Mammary epithelial cell (primary cell): ENCODE measurements at regions of chr3 and their contacts with region 1.

Region 1: GRCh38 chr3:194315088-194315964 is 35.8 kb downstream of the CPN2 start:
- DNase-seq: peak; percentile 89
- H3K4me3 ChIP-seq: peak overlapping the region; percentile 26 to 51 (median 30)
- H3K27ac ChIP-seq: peak overlapping the region; percentile 63
- H3K4me1 ChIP-seq: peaks cover 16% of the 10 kb centered on the region
- H3K27me3 ChIP-seq: no peaks in the 10 kb centered on the region
- CTCF ChIP-seq: peak; percentile 73 to 92

Region 2: DNA sequence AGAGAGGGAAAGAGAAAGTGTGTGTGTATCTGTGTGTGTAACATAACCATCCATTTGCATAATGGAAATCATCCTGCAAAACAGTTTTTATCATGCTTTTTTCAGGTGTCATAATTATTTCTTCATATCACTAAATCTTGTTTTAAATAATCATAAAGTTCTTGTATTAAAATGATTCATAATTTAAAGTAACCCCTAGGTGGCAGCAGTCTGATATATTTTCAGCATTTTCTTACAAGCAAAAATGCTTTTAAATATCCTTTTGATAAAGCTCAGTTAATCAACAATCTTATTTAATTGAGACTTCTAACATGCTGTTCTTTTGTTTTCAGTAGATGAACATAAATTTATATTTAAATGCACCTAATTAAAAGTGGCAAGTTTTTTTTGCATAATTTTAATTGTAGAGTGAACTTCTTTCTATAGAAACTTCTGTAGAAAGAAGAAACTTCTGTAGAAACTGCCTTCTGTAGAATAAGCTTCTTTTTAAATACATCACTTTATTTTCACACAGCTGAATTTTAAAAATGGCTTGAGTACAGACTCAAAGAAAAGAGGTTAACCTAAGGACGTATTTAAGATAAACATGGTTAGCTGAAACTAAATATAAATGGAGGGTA is 649.8 kb before region 1 on chr3:
- CTCF ChIA-PET with region 1: interaction called, 3 read pairs
- dilution Hi-C with region 1: no loop called
- in situ Hi-C with region 1: loop called in 1 of 2 experiments (anchors 25 kb)
- intact Hi-C with region 1: loop called (anchors 1 kb)
- DNase-seq: peak; percentile 18
- H3K4me3 ChIP-seq: no peak overlapping the region
- H3K27ac ChIP-seq: no peak overlapping the region
- H3K4me1 ChIP-seq: no peaks in the 10 kb centered on the region
- H3K27me3 ChIP-seq: no peaks in the 10 kb centered on the region
- CTCF ChIP-seq: peak; percentile 29 to 34

Region 3: DNA sequence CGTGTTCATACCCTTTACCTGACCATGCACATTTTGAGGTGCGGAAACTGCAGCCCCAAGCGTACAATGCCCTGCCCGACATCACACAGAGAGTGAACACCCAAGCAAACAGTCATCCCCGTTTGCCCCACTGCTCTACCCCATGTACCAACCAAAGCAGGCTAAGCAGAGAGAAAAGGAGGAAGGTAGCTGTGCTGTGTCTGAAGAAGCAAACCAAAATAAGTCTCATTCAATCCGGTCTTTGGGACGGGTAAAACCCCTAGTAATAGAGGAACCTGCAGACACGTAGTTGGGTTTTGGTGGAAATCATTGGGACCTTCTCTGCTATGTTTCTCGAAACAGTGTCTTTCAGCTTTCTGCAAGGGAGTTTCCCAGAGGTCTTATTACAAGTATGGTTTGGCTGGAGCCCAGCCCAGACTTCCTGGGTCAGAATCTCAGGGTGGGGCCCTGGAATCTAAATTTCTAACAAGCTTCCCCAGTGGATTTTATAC is 344.0 kb before region 1 on chr3:
- CTCF ChIA-PET with region 1: no interaction called
- dilution Hi-C with region 1: no loop called
- in situ Hi-C with region 1: no loop called
- intact Hi-C with region 1: loop called (anchors 10 kb)
- DNase-seq: peak; percentile 76
- H3K4me3 ChIP-seq: no peak overlapping the region
- H3K27ac ChIP-seq: no peak overlapping the region
- H3K4me1 ChIP-seq: peaks cover 26% of the 10 kb centered on the region
- H3K27me3 ChIP-seq: no peaks in the 10 kb centered on the region
- CTCF ChIP-seq: no peak

Region 4: DNA sequence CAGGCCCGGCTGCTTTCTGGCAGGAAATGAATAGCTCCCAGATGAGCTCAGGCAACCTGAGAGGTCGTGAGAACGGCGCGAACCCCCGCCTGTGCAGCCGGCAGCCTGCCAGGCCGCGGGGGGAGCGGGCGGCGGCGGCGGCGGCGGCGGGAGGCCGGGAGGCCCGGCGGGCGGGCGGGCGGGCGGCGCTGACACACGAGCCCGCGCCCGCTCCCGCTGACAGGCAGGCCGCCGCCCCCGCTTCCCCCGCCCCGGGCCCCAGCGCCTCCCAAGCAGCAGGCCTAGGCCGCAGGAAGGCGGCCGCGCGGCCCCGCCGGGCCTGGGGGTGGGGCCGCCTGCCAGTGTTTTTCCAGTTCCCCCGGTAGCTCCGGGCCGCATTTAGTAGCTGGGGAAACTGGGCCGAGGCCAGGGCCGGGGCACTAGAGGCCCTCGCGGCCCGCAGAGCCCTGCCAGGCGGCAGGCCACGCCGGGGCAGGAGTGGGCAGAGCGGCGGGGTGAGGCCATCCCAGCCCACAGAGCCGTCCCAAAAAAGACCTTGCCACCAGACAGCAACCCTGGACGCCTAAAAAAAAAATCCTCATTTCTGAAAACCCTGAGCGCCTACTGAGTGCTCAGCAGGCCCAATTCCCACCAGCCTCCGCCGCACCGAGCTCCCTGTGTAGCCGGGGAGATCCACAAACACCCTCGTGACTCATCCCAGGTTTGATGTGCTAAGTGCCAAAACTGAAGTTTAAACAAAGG is 173.7 kb before region 1 on chr3:
- CTCF ChIA-PET with region 1: interaction called, 12 read pairs
- dilution Hi-C with region 1: no loop called
- in situ Hi-C with region 1: loop called in 1 of 2 experiments (anchors 5 kb)
- intact Hi-C with region 1: loop called (anchors 1 kb)
- DNase-seq: peak; percentile 96
- H3K4me3 ChIP-seq: peak overlapping the region in 2 of 3 experiments; percentile 35 to 38
- H3K27ac ChIP-seq: peak overlapping the region; percentile 97
- H3K4me1 ChIP-seq: peaks cover 51% of the 10 kb centered on the region
- H3K27me3 ChIP-seq: no peaks in the 10 kb centered on the region
- CTCF ChIP-seq: no peak

Region 5: GRCh38 chr3:194166682-194167479 is 148.4 kb before region 1 on chr3:
- CTCF ChIA-PET with region 1: no interaction called
- dilution Hi-C with region 1: no loop called
- in situ Hi-C with region 1: loop called in 1 of 2 experiments (anchors 10 kb)
- intact Hi-C with region 1: loop called (anchors 1 kb)
- DNase-seq: no peak
- H3K4me3 ChIP-seq: no peak overlapping the region
- H3K27ac ChIP-seq: no peak overlapping the region
- H3K4me1 ChIP-seq: peaks cover 4% of the 10 kb centered on the region
- H3K27me3 ChIP-seq: no peaks in the 10 kb centered on the region
- CTCF ChIP-seq: no peak